T-cell (primary cell): ENCODE measurements at regions of chr5 and their contacts with region 1.

Region 1: GRCh38 chr5:14284392-14285148 is 141.4 kb downstream of the TRIO start:
- DNase-seq: no peak
- ATAC-seq: no peak
- H3K4me3 ChIP-seq: no peak overlapping the region
- H3K4me3 Mint-ChIP-seq: no peak overlapping the region
- H3K27ac ChIP-seq: no peak overlapping the region
- H3K27ac Mint-ChIP-seq: no peak overlapping the region
- H3K4me1 ChIP-seq: no peaks in the 10 kb centered on the region
- H3K4me1 Mint-ChIP-seq: no peaks in the 10 kb centered on the region
- H3K27me3 ChIP-seq: no peaks in the 10 kb centered on the region
- H3K27me3 Mint-ChIP-seq: peaks cover 2 to 4% of the 10 kb centered on the region in 2 donors

Region 2: DNA sequence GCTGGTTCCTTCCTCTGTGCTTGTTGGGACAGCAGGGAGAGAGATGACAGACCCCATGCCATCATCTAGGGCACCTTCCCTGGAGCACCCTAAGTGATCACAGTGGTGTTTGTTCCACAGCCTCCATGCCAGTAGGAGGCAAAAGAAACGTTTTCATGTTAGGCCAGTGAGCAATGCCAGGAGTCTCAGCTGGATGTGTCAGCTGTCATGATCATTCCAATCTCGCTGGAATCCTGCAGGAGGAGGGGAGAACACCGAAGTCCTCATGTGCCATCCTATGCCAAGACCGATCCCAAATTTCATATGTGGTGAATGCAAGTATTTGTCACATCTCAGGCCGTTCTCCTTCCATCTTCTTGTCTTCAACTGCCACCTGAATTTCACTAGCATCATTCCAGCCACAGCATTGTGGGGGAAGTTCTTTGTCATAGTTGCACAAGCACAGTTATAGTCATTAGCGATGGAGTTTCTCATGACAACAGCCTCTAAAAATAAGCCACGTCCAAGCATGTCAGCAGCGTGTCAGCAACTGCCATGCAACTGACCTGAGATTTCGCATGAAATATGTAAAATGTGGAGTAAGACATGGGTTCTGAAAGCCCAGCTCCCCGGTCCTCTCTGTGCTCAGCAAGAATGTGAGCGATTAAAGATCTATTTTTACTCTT is 242.9 kb before region 1 on chr5:
- CTCF ChIA-PET with region 1: no interaction called
- POLR2A ChIA-PET with region 1: no interaction called
- DNase-seq: no peak
- ATAC-seq: no peak
- H3K4me3 ChIP-seq: no peak overlapping the region
- H3K4me3 Mint-ChIP-seq: no peak overlapping the region
- H3K27ac ChIP-seq: no peak overlapping the region
- H3K27ac Mint-ChIP-seq: no peak overlapping the region
- H3K4me1 ChIP-seq: no peaks in the 10 kb centered on the region
- H3K4me1 Mint-ChIP-seq: no peaks in the 10 kb centered on the region
- H3K27me3 ChIP-seq: peaks cover 0 to 11% of the 10 kb centered on the region in 2 experiments
- H3K27me3 Mint-ChIP-seq: peaks cover 2 to 26% of the 10 kb centered on the region in 2 donors

Region 3: DNA sequence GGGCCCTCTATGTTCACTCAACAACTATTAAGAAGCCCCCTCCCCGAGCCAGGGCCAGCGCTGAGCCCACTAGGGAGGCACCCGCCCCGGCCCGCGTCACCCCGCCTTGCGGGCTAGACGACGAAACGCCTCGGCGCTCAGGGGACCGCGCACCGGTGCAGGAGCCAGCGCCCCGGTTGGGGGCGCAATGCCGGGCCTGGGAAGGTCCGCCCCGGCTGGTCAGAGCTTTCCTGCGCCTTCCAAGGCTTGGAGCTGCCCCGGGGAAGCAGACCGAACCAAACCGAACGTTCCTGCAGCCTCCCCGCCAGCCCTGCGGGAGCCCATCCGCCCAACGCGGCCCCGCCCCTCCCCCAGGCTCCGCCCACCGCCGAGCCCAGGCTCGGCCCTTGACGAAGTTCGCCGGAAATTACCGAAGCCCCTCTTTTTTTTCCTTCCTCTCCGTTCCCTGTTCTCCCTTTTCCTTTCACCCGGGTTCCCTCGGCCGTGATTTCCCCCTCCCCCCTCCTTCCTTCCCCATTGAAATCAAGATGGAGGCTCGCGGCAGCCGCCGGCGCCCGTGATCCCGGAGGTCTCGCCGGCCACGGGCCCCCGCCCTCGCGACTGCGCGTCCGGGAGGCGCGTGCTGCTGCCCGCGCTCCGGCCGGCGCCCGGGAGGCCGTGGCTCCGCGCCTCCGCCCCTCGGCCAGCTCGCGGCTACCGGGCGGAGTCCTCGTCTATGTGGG is 141.6 kb before region 1 on chr5 and contains the start of gene TRIO:
- CTCF ChIA-PET with region 1: no interaction called
- POLR2A ChIA-PET with region 1: interaction called in 1 of 2 experiments, 12 read pairs
- DNase-seq: peak; percentile 24 to 81 (median 67)
- ATAC-seq: peak; percentile 73 to 82 (median 80)
- H3K4me3 ChIP-seq: peak within 1 kb of the TSS; percentile 55 to 89
- H3K4me3 Mint-ChIP-seq: peak within 1 kb of the TSS; percentile 78 to 87 (median 84)
- H3K27ac ChIP-seq: no peak within 1 kb of the TSS
- H3K27ac Mint-ChIP-seq: peak within 1 kb of the TSS; percentile 46 to 55
- H3K4me1 ChIP-seq: peaks cover 7 to 19% of the 10 kb centered on the region in 2 experiments
- H3K4me1 Mint-ChIP-seq: peaks cover 8 to 22% (median 21%) of the 10 kb centered on the region in 3 donors
- H3K27me3 ChIP-seq: peaks cover 0 to 31% of the 10 kb centered on the region in 2 experiments
- H3K27me3 Mint-ChIP-seq: peaks cover 17 to 62% of the 10 kb centered on the region in 2 donors
- total RNA-seq, gene TRIO: 6.2 to 31.1 (median 11.8) TPM

Region 4: DNA sequence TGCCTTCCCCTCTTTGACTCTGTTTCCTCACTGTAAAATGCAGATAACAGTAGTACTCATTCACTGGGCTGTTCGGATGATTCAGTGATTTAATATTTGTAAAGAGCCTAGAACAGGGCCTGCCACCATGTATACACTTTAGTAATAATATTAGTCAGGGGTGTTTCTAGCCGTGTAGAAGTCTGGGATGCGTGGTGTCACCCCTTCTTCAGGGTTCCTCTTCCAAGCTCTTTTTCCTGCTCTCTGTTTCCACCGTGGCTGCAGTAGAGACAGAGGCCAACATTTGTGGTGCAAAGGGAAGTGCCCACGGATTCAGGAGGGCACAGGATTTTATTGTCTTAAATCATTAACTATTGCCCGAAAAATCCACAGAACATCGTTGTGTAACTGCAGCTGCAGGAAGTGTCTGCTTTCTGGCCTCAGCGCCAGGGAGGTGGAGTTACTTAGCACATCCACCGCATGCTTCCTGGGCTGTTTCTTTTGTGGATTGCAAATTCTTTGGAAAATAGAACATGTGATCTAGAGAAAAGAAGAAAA is 79.7 kb before region 1 on chr5:
- CTCF ChIA-PET with region 1: no interaction called
- POLR2A ChIA-PET with region 1: no interaction called
- DNase-seq: no peak
- ATAC-seq: no peak
- H3K4me3 ChIP-seq: peak overlapping the region in 1 of 2 donors; percentile 29
- H3K4me3 Mint-ChIP-seq: no peak overlapping the region
- H3K27ac ChIP-seq: no peak overlapping the region
- H3K27ac Mint-ChIP-seq: peak overlapping the region in 1 of 2 donors; percentile 35
- H3K4me1 ChIP-seq: peaks cover 0 to 4% of the 10 kb centered on the region in 2 experiments
- H3K4me1 Mint-ChIP-seq: peaks cover 7 to 10% (median 9%) of the 10 kb centered on the region in 3 donors
- H3K27me3 ChIP-seq: peaks cover 0 to 15% of the 10 kb centered on the region in 2 experiments
- H3K27me3 Mint-ChIP-seq: peaks cover 0 to 6% of the 10 kb centered on the region in 2 donors